ENCODE measurements at regions of chr6 and their contacts with region 1.

Region 1: GRCh38 chr6:43723737-43724295 is 36.2 kb upstream of the MRPS18A start:
- DNase-seq: peak; percentile 71
- ATAC-seq: peak; percentile 84

Region 2: GRCh38 chr6:43616725-43617472 is 106.9 kb before region 1 on chr6:
- intact Hi-C with region 1: no loop called
- DNase-seq: no peak
- ATAC-seq: no peak

Region 3: GRCh38 chr6:43817192-43817591 is 93.4 kb after region 1 on chr6:
- intact Hi-C with region 1: loop called (anchors 10 kb)
- DNase-seq: peak; percentile 79
- ATAC-seq: peak; percentile 97

Region 4: GRCh38 chr6:43970913-43971775 is 247.3 kb after region 1 on chr6:
- intact Hi-C with region 1: no loop called
- DNase-seq: no peak
- ATAC-seq: peak; percentile 10